ENCODE measurements at regions of chr9 and their contacts with region 1.

Region 1: DNA sequence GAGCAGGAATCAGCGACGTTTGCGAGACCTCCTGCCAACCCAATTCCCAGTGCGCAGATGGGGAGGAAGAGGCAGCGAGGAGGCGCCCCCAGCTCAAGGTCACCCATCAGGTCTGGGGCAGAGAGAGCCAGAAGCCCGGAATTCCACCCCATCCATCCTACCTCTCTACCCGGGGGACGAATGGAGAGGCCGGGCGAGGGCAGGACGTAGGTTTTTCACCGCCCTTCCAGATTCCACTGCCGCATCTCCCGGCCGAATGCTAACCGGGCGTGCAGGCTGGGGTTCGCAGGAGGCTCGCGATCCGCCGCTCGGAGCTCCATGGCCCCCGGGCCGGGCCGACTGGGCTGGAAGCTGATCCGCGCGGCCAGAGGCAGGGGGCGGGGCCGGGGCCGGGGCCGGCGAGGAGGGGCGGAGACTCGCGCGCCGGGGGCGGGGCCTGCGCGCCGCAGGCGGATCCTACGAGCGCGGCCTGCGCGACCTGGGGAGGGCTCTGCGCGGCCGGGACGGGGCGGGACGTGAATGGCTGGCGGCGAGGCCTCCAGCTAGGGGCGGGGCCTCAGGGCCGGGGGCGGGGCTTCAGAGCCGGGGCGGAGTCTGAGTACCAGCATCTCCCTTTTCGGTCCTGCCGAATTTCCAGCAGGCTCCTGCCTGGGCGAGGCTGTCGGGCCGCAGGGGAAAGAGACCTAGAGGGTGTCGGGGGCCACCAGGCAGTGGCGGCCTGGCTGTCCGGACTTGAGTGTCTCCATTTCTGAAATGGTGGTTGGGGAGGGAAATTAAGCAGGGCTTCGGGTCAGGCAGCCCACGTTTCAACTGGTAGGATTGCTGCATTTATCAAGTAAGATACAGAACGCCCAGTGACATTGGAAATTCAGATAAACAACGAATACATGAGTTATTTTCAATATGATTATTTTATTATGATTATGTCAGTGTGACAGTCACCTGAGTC is at the start of gene ST6GALNAC4:
- DNase-seq: no peak
- ATAC-seq: peak; percentile 85
- H3K4me3 ChIP-seq: peak within 1 kb of the TSS; percentile 95
- H3K27ac ChIP-seq: peak within 1 kb of the TSS; percentile 98
- H3K4me1 ChIP-seq: peaks cover 38% of the 10 kb centered on the region
- H3K27me3 ChIP-seq: no peaks in the 10 kb centered on the region
- CTCF ChIP-seq: no peak
- EP300 ChIP-seq: no peak
- POLR2A ChIP-seq: peak; percentile 86
- RAD21 ChIP-seq: no peak
- polyA plus RNA-seq, gene ST6GALNAC4: 4.2 to 6.6 TPM

Region 2: DNA sequence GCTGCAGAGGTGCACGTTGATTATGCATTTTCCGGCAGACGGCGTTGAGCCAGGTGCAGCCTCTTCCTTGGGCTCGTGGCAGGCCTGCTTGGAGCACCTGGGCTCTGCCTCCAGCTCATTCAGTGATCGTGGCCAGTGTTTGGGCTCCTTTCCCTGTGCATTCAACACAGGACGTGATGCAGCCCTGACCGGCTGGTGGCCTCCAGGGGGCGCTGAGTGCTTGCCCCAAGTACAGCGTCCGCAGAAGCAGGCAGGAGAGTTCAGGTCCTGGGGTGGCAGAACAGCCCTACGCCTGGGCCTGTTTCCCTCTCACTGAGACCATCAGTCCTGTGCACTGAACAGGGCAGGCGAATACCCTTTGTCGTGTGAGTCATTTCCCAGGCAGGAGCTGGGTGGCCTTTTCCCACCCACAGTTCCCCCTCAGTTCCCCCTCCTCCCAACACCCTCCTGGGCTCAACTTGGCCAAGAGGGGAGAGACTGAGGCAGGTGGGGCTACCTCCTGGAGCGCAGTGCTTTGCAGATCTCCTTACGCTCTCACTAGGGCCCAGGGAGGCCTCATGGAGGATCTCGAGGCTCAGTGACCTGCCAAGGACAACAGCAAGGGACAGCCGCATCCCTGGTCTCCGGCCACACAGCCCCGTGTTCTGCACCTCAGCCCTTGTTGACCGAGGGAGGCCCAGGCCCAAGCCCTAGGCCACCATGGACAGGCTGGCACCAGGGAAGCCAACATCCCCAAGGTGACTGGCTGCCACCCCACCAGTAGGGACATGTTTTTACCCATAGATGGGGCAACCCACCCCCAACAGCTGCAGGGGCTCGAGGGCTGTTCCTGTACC is 412.8 kb before region 1 on chr9:
- CTCF ChIA-PET with region 1: no interaction called
- POLR2A ChIA-PET with region 1: no interaction called
- RAD21 ChIA-PET with region 1: interaction called, 3 read pairs
- SMC1A ChIA-PET with region 1: no interaction called
- in situ Hi-C with region 1: no loop called
- intact Hi-C with region 1: loop called (anchors 2 kb)
- DNase-seq: no peak
- ATAC-seq: peak; percentile 89
- H3K4me3 ChIP-seq: no peak overlapping the region
- H3K27ac ChIP-seq: no peak overlapping the region
- H3K4me1 ChIP-seq: no peaks in the 10 kb centered on the region
- H3K27me3 ChIP-seq: no peaks in the 10 kb centered on the region
- CTCF ChIP-seq: peak; percentile 84 to 94 (median 93)
- EP300 ChIP-seq: no peak
- POLR2A ChIP-seq: no peak
- RAD21 ChIP-seq: peak; percentile 82

Region 3: DNA sequence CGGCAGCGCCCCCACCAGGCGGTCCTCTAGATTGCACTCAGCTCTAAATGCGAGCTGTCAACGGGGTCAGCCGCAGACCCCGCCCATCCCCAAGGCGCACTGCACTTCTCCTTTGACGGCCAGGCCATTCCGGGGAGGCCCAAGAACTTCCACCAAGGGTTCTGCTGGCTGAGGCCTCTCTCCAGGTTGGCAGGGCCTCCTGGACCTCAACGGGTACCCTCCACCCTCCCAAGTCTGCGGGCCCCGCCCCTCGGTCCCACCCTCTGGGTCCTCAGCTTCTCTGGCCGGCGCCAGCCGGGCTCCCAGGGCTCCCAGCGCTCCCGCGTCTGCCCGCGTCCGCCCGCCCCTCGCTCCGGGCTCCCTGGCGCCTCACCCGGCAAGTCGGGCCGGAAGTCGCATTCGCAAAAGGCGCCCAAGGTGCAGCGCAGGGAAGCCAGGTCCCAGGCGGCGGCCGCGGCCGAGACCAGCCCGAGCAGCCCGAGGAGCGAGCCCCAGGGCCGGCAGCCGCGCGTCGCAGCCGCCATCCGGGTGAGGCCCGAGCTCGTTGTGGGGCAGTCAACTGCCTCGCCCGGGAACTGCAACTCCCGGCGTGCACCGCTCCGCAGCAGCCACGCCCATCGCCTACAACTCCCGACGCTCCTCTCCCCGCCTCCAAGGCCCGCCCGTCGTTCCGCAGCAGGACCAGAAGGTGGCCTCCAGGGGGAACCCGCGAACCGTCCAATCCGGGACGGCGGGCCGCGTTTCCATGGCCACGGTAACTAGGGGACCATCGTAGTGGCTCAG is 182.0 kb before region 1 on chr9 and contains the start of gene TOR2A:
- CTCF ChIA-PET with region 1: interaction called, 79 read pairs
- POLR2A ChIA-PET with region 1: interaction called, 4 read pairs
- RAD21 ChIA-PET with region 1: interaction called, 83 read pairs
- SMC1A ChIA-PET with region 1: interaction called, 22 read pairs
- in situ Hi-C with region 1: loop called (anchors 5 kb)
- intact Hi-C with region 1: loop called (anchors 2 kb)
- DNase-seq: peak; percentile 81
- ATAC-seq: peak; percentile 98
- H3K4me3 ChIP-seq: peak within 1 kb of the TSS; percentile 76
- H3K27ac ChIP-seq: peak within 1 kb of the TSS; percentile 71
- H3K4me1 ChIP-seq: peaks cover 6% of the 10 kb centered on the region
- H3K27me3 ChIP-seq: no peaks in the 10 kb centered on the region
- CTCF ChIP-seq: peak; percentile 96 to 99 (median 96)
- EP300 ChIP-seq: peak in 1 of 2 experiments; percentile 62; a peak in 1 of 4 replicates
- POLR2A ChIP-seq: peak; percentile 93
- RAD21 ChIP-seq: peak; percentile 96
- polyA plus RNA-seq, gene TOR2A: 0.52 to 1.6 TPM

Region 4: GRCh38 chr9:127779136-127779981 is 137.6 kb before region 1 on chr9:
- CTCF ChIA-PET with region 1: interaction called, 7 read pairs
- POLR2A ChIA-PET with region 1: interaction called, 16 read pairs
- RAD21 ChIA-PET with region 1: interaction called, 19 read pairs
- SMC1A ChIA-PET with region 1: interaction called, 3 read pairs
- in situ Hi-C with region 1: no loop called
- intact Hi-C with region 1: loop called (anchors 2 kb)
- DNase-seq: peak; percentile 79
- ATAC-seq: peak; percentile 62
- H3K4me3 ChIP-seq: peak overlapping the region; percentile 100
- H3K27ac ChIP-seq: peak overlapping the region; percentile 93
- H3K4me1 ChIP-seq: peaks cover 44% of the 10 kb centered on the region
- H3K27me3 ChIP-seq: no peaks in the 10 kb centered on the region
- CTCF ChIP-seq: no peak
- EP300 ChIP-seq: peak in 1 of 2 experiments; percentile 23; a peak in 1 of 4 replicates
- POLR2A ChIP-seq: peak; percentile 50; the same call in 1 of the 2 replicates
- RAD21 ChIP-seq: no peak

Region 5: DNA sequence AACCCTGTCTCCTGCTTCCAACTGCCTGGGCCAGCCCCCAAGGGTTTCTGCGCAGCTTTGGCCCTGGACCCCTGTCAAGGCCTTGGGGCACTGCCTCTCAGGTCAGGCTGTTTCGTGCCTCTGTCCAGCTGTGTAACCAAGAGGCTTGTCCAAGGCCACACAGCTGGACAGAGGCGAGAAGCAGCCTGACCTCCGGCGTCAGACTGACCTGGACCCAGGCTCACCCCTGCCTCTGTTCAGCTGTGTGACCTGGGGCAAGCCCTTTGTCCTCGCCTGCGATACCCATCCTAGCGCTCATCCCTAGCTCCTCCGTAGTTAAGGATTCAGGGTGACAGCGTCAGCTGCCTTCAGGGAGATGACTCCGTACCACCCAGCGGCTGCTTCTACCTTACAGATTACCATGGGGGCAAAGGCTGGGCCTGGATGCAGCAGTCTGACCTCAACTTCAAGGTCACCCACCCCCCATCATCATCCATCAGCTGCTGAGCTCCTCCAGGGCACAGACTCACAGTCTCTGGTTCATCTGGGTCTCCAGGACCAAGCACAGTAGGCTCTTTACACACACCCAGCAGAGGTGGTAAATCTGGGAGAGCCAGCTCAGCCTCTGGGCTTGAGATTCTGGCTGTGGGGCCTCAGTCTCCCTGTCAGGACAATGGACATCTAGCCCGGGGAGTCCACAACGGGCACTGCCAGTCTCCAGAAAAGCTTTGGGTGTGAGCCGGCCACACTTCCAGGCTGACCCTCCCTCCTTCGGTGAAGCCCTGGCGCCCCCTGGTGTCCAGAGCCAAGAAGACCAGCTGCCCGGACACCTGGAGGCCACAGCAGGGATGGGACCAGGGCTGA is 47.4 kb before region 1 on chr9:
- CTCF ChIA-PET with region 1: interaction called, 91 read pairs
- POLR2A ChIA-PET with region 1: no interaction called
- RAD21 ChIA-PET with region 1: interaction called, 18 read pairs
- SMC1A ChIA-PET with region 1: interaction called, 16 read pairs
- in situ Hi-C with region 1: no loop called
- intact Hi-C with region 1: loop called (anchors 2 kb)
- DNase-seq: no peak
- ATAC-seq: peak; percentile 96
- H3K4me3 ChIP-seq: no peak overlapping the region
- H3K27ac ChIP-seq: no peak overlapping the region
- H3K4me1 ChIP-seq: peaks cover 22% of the 10 kb centered on the region
- H3K27me3 ChIP-seq: no peaks in the 10 kb centered on the region
- CTCF ChIP-seq: peak; percentile 87 to 98 (median 91)
- EP300 ChIP-seq: no peak
- POLR2A ChIP-seq: no peak
- RAD21 ChIP-seq: peak; percentile 99

Region 6: DNA sequence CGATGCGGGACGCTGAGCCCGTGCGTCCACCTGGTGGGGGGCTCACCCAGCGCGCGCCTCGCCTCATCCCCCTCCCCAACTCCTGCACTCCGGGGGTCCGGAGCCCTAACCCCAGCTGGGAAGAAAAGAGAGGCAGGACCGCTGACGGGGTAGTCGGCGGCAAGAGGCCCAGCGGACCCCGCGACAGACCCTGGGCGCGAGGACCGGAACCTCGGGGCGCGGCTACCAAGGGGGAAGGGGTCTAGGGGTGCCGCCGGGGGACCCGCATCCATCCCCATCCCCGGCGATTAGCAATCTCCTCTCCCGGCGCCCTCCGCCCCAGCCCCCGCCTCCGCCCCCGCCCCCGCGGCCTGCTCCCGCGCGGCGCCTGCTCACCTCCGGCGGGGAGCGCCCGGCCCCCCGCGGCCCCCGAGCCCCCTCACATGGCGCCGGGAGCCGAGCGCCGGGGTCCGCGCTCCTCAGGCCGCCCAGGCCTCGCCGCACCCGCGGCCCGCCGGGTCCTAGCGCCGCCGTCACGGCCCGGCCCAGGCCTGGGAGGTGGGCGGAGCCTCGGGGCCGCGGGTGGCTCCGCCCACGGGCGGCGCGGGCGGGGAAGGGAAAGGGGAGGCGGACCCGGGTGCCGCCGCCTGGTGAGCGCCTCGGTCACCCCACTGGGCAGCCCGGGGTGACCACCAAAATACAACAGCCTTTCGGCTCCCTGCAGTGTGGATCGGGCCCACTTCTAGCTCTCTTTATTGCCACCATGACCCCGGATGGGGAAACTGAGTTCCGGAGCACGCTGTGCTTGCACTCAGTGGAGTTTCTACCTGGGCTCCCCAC is 17.6 kb before region 1 on chr9 and contains the start of gene ST6GALNAC6:
- CTCF ChIA-PET with region 1: interaction called, 24 read pairs
- POLR2A ChIA-PET with region 1: interaction called, 166 read pairs
- RAD21 ChIA-PET with region 1: interaction called, 92 read pairs
- SMC1A ChIA-PET with region 1: interaction called, 37 read pairs
- in situ Hi-C with region 1: no loop called
- intact Hi-C with region 1: no loop called
- DNase-seq: no peak
- ATAC-seq: peak; percentile 76
- H3K4me3 ChIP-seq: peak within 1 kb of the TSS; percentile 91
- H3K27ac ChIP-seq: peak within 1 kb of the TSS; percentile 65; the same call in 1 of the 2 replicates
- H3K4me1 ChIP-seq: peaks cover 49% of the 10 kb centered on the region
- H3K27me3 ChIP-seq: no peaks in the 10 kb centered on the region
- CTCF ChIP-seq: no peak
- EP300 ChIP-seq: no peak
- POLR2A ChIP-seq: peak; percentile 55; the same call in 1 of the 2 replicates
- RAD21 ChIP-seq: peak; percentile 17; the same call in 1 of the 2 replicates
- polyA plus RNA-seq, gene ST6GALNAC6: 0.40 to 0.48 TPM

Region 7: GRCh38 chr9:127966416-127967150 is 49.6 kb after region 1 on chr9:
- CTCF ChIA-PET with region 1: no interaction called
- POLR2A ChIA-PET with region 1: no interaction called
- RAD21 ChIA-PET with region 1: no interaction called
- SMC1A ChIA-PET with region 1: no interaction called
- in situ Hi-C with region 1: no loop called
- intact Hi-C with region 1: no loop called
- DNase-seq: no peak
- ATAC-seq: no peak
- H3K4me3 ChIP-seq: no peak overlapping the region
- H3K27ac ChIP-seq: no peak overlapping the region
- H3K4me1 ChIP-seq: peaks cover 41% of the 10 kb centered on the region
- H3K27me3 ChIP-seq: no peaks in the 10 kb centered on the region
- CTCF ChIP-seq: no peak
- EP300 ChIP-seq: no peak
- POLR2A ChIP-seq: peak; percentile 9; the same call in 1 of the 2 replicates
- RAD21 ChIP-seq: no peak

Measured in GM12878 (cell line).